Activated B cell treated with CpG ODN at 0.5 μM for 24 hours (primary cell): ENCODE measurements at regions of chr20 and their contacts with region 1.

Region 1: DNA sequence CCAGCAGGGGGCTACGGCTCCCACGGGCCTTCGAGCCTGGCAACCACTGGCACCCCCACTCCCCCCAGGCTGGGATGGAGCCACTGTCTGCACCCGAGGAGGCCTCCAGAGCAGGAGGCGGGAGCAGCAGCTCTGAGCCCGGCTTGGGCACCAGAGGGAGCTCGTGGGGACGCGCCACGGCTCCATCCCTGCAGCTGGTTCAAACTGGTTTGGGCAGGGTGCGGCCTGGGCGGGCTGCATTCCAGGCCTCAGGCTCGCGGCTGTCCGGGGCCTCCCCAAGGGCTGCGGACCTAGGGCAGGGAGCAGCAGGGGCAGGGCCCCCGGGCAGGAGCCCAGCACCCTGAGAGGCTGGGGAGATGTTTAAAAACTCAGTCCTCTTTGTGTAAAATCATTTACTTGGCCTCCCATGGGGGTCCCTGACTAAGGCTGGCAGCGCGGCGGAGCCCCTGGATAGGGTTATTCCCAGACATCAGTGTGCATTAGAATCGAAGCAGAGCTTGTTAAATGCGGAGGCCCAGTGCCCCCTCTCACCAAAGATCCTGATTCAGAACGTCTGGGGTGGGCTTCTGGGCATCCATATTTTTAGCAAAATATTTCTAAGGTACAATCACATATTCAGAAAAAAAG is 4.1 kb upstream of the BCAS4 start:
- DNase-seq: peak; percentile 78
- ATAC-seq: peak; percentile 67
- H3K4me3 Mint-ChIP-seq: peak overlapping the region; percentile 52
- H3K27ac Mint-ChIP-seq: peak overlapping the region; percentile 87
- H3K4me1 Mint-ChIP-seq: peaks cover 23% of the 10 kb centered on the region
- H3K27me3 Mint-ChIP-seq: no peaks in the 10 kb centered on the region
- CTCF ChIP-seq: no peak

Region 2: GRCh38 chr20:50815162-50815989 is 24.6 kb after region 1 on chr20:
- CTCF ChIA-PET with region 1: interaction called, 145 read pairs
- POLR2A ChIA-PET with region 1: interaction called, 233 read pairs
- intact Hi-C with region 1: loop called (anchors 1 kb)
- DNase-seq: no peak
- ATAC-seq: peak; percentile 56
- H3K4me3 Mint-ChIP-seq: peak overlapping the region; percentile 81
- H3K27ac Mint-ChIP-seq: peak overlapping the region; percentile 98
- H3K4me1 Mint-ChIP-seq: peaks cover 96% of the 10 kb centered on the region
- H3K27me3 Mint-ChIP-seq: no peaks in the 10 kb centered on the region
- CTCF ChIP-seq: no peak

Region 3: DNA sequence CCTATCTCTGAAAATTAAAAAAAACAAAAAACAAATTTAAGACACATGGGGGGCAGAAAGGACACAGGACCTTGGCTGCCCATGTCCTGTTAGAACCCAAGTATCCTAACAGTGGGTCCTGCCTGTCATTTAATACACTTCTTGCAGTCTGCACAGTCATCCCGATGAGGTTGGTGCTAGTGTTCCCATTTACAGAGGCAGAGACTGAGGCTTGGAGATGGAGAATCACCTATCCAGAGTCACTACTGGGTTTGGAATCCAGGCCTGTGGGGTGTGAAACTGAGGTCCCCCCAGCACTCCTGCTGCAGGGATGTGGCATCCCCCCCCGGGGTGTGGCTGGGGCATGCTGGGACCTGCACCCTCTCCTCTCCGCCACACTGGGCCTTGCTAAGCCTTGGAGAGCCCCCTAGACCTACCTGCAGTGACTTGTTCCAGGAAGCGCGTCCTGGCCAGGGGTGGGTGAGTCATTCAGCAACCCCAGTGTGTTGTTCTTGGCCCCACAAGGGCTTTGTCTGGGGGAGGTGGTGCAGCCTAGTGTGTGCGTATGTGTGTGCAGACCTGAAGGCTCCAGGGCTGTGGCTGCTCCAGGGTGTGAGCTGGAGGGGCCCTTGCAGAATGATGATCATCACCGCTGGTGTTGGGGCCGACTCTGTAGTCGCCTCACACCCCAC is 53.8 kb after region 1 on chr20:
- CTCF ChIA-PET with region 1: interaction called, 9 read pairs
- POLR2A ChIA-PET with region 1: interaction called, 6 read pairs
- intact Hi-C with region 1: loop called (anchors 1 kb)
- DNase-seq: peak; percentile 28
- ATAC-seq: peak; percentile 91
- H3K4me3 Mint-ChIP-seq: no peak overlapping the region
- H3K27ac Mint-ChIP-seq: peak overlapping the region; percentile 83
- H3K4me1 Mint-ChIP-seq: peaks cover 47% of the 10 kb centered on the region
- H3K27me3 Mint-ChIP-seq: no peaks in the 10 kb centered on the region
- CTCF ChIP-seq: no peak

Region 4: DNA sequence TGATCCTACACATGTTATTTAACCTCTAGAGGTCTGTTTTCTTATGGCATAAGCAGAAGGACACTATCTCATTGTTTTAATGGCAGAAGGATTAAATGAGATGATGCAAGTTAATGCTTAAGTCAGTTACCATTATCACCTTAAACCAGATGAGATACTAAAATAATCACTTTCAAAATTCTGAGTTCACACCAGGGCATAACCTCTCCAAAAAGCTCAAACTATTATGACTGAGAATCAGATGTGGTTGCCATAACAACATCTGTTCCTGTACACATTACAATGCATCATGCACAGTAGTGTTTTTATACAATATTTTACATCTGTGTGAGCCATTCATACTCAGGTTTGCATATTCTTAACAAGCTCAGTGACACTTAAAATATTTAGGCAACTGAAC is 130.2 kb after region 1 on chr20:
- CTCF ChIA-PET with region 1: interaction called, 231 read pairs
- POLR2A ChIA-PET with region 1: interaction called, 7 read pairs
- intact Hi-C with region 1: no loop called
- DNase-seq: no peak
- ATAC-seq: peak; percentile 38
- H3K4me3 Mint-ChIP-seq: no peak overlapping the region
- H3K27ac Mint-ChIP-seq: no peak overlapping the region
- H3K4me1 Mint-ChIP-seq: peaks cover 91% of the 10 kb centered on the region
- H3K27me3 Mint-ChIP-seq: no peaks in the 10 kb centered on the region
- CTCF ChIP-seq: no peak

Region 5: DNA sequence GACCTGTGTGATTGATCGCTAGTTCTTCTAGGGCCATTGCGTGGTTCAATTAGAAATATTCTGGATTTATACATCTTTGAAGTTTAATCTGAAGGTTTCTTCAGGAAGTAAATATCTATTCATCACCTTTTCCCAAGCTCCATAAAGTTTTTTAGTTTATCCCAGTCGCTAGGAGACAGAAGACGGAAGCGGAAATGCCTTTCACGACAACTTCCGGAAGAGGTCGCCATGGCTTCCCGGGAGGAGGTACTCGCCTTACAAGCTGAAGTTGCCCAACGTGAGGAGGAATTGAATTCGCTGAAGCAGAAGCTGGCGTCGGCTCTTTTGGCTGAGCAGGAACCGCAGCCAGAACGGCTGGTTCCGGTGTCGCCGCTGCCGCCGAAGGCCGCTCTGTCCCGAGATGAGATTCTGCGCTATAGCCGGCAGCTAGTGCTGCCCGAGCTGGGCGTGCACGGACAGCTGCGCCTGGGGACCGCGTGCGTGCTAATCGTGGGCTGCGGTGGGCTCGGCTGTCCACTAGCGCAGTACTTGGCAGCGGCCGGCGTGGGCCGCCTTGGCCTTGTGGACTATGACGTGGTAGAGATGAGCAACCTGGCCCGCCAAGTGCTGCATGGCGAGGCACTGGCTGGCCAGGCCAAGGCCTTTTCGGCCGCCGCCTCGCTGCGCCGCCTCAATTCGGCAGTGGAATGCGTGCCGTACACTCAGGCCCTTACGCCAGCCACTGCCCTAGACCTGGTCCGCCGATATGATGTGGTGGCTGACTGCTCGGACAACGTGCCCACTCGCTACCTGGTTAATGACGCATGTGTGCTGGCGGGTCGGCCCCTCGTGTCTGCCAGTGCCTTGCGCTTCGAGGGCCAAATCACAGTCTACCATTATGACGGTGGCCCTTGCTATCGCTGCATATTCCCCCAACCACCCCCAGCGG is 168.1 kb after region 1 on chr20 and contains the start of gene MOCS3:
- CTCF ChIA-PET with region 1: interaction called, 19 read pairs
- POLR2A ChIA-PET with region 1: interaction called, 64 read pairs
- intact Hi-C with region 1: loop called (anchors 1 kb)
- DNase-seq: peak; percentile 61
- ATAC-seq: peak; percentile 81
- H3K4me3 Mint-ChIP-seq: peak within 1 kb of the TSS; percentile 96
- H3K27ac Mint-ChIP-seq: peak within 1 kb of the TSS; percentile 99
- H3K4me1 Mint-ChIP-seq: peaks cover 49% of the 10 kb centered on the region
- H3K27me3 Mint-ChIP-seq: no peaks in the 10 kb centered on the region
- CTCF ChIP-seq: no peak
- total RNA-seq, gene MOCS3: 7.5 and 8.1 TPM in 2 replicates

Region 6: DNA sequence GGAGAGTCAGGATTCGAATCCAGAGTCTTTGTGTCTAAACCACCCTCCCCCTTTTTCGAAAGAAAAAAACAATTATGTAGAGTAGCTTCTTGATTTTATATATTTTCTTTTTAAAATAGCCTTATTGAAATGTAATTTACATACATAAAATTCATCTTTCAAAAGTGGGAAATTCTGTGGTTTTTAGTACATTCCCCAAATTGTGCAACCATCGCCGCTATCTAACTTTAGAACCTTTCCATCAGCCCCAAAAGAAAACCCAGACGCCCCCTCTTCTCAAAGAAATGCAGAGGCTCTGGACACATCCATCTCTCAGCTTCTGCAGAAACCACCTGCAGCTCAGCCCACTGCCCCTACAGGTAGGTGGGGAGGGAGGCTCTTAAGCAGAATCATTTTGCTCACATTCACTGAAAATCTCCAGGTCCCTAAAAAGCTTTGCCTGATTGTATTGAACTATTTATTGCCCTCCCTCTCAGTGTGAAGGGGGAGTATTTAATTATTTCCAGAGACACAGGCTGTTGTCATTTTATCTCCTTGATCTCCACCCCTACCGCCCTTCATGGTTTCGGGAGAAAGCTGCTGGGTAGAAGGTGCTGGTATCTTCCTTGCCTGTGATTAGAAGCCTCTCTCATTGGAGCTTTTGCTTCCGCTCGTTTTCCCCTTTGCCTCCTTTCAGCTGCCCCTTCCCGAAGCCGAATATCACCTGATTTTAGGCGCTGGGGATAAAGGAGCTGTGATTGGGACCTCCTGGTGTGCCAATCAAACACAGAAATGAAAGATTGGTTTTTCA is 300.8 kb after region 1 on chr20:
- CTCF ChIA-PET with region 1: no interaction called
- POLR2A ChIA-PET with region 1: no interaction called
- intact Hi-C with region 1: no loop called
- DNase-seq: no peak
- ATAC-seq: no peak
- H3K4me3 Mint-ChIP-seq: peak overlapping the region; percentile 65
- H3K27ac Mint-ChIP-seq: peak overlapping the region; percentile 57
- H3K4me1 Mint-ChIP-seq: peaks cover 40% of the 10 kb centered on the region
- H3K27me3 Mint-ChIP-seq: peaks cover 26% of the 10 kb centered on the region
- CTCF ChIP-seq: no peak

Region 7: GRCh38 chr20:51306503-51307358 is 516.0 kb after region 1 on chr20:
- CTCF ChIA-PET with region 1: interaction called, 7 read pairs
- POLR2A ChIA-PET with region 1: no interaction called
- intact Hi-C with region 1: loop called (anchors 1 kb)
- DNase-seq: peak; percentile 65
- ATAC-seq: peak; percentile 98
- H3K4me3 Mint-ChIP-seq: no peak overlapping the region
- H3K27ac Mint-ChIP-seq: no peak overlapping the region
- H3K4me1 Mint-ChIP-seq: no peaks in the 10 kb centered on the region
- H3K27me3 Mint-ChIP-seq: peaks cover 25% of the 10 kb centered on the region
- CTCF ChIP-seq: no peak